ENCODE measurements at regions of chr15 and their contacts with region 1.

Region 1: DNA sequence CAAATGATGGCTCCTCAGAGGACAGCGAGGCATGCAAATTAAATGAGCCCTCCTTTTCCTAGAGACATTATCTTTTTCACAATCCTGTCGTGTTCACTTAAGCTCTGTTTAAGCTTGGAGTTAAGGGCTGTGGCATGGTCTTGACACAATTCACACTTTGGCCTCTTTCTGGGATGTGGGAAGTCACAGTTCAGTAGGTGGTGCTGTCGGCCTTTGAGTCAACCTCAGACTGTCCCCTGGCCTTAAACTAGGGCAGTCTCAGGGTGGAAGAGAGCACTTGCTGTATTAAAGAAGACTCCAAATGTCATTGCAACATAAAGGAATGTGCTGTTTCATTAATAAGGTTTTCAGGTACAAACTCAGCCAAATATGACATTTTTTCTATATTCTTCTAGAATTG is 351.0 kb downstream of the MCTP2 start:
- DNase-seq: peak; percentile 66
- H3K4me3 Mint-ChIP-seq: no peak overlapping the region
- H3K27ac Mint-ChIP-seq: no peak overlapping the region
- H3K4me1 Mint-ChIP-seq: peaks cover 31% of the 10 kb centered on the region
- H3K27me3 Mint-ChIP-seq: peaks cover 71% of the 10 kb centered on the region

Region 2: GRCh38 chr15:94174399-94174802 is 408.0 kb before region 1 on chr15:
- CTCF ChIA-PET with region 1: no interaction called
- intact Hi-C with region 1: loop called (anchors 1 kb)
- DNase-seq: peak; percentile 26
- H3K4me3 Mint-ChIP-seq: no peak overlapping the region
- H3K27ac Mint-ChIP-seq: peak overlapping the region; percentile 10
- H3K4me1 Mint-ChIP-seq: peaks cover 19% of the 10 kb centered on the region
- H3K27me3 Mint-ChIP-seq: peaks cover 6% of the 10 kb centered on the region

Region 3: DNA sequence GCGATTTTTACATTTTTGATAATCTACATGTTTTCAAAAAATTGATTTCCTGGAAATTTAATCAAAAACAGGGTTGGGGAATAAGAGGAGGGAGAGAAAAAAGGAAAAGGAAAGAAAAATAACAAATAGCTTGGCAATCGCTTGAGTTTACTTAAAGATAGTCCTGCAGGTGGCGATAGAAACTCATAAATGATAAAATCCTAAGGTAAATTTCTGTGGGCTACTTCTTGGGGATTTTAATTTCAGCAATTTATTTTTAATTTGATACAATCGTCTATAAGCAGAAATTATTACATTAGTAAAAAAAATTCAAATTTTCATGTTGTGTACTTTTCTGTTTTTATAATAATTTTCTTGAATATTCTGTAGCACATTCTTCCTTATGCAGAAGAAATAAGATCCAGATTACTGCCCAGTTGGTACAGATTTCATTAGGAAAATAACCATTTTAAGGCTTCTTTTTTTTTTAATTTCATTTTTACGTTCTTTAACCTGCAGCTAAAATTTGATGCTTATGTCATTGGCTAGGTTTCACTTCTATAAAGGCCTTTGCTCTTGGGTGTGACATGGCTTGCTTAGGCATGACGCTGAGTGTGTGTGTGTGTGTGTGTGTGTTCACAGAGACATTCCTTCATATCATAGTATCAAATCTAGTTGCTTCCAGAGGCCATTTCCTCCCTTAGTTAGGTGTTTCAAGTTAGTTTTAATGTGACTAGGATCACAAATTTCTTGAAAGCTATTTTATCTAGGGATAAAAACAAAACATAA is 169.2 kb before region 1 on chr15:
- CTCF ChIA-PET with region 1: no interaction called
- intact Hi-C with region 1: loop called (anchors 5 kb)
- DNase-seq: no peak
- H3K4me3 Mint-ChIP-seq: no peak overlapping the region
- H3K27ac Mint-ChIP-seq: no peak overlapping the region
- H3K4me1 Mint-ChIP-seq: no peaks in the 10 kb centered on the region
- H3K27me3 Mint-ChIP-seq: no peaks in the 10 kb centered on the region

Region 4: GRCh38 chr15:94670438-94671034 is 88.2 kb after region 1 on chr15:
- CTCF ChIA-PET with region 1: interaction called, 5 read pairs
- intact Hi-C with region 1: loop called (anchors 5 kb)
- DNase-seq: no peak
- H3K4me3 Mint-ChIP-seq: no peak overlapping the region
- H3K27ac Mint-ChIP-seq: no peak overlapping the region
- H3K4me1 Mint-ChIP-seq: no peaks in the 10 kb centered on the region
- H3K27me3 Mint-ChIP-seq: peaks cover 12% of the 10 kb centered on the region

Region 5: GRCh38 chr15:94683902-94684301 is 101.5 kb after region 1 on chr15:
- CTCF ChIA-PET with region 1: no interaction called
- intact Hi-C with region 1: no loop called
- DNase-seq: no peak
- H3K4me3 Mint-ChIP-seq: no peak overlapping the region
- H3K27ac Mint-ChIP-seq: no peak overlapping the region
- H3K4me1 Mint-ChIP-seq: no peaks in the 10 kb centered on the region
- H3K27me3 Mint-ChIP-seq: no peaks in the 10 kb centered on the region

Region 6: GRCh38 chr15:95192923-95193322 is 610.6 kb after region 1 on chr15:
- CTCF ChIA-PET with region 1: no interaction called
- intact Hi-C with region 1: no loop called
- DNase-seq: no peak
- H3K4me3 Mint-ChIP-seq: no peak overlapping the region
- H3K27ac Mint-ChIP-seq: no peak overlapping the region
- H3K4me1 Mint-ChIP-seq: no peaks in the 10 kb centered on the region
- H3K27me3 Mint-ChIP-seq: peaks cover 5% of the 10 kb centered on the region

Region 7: GRCh38 chr15:95291898-95292472 is 709.6 kb after region 1 on chr15:
- CTCF ChIA-PET with region 1: no interaction called
- intact Hi-C with region 1: loop called (anchors 1 kb)
- DNase-seq: no peak
- H3K4me3 Mint-ChIP-seq: no peak overlapping the region
- H3K27ac Mint-ChIP-seq: no peak overlapping the region
- H3K4me1 Mint-ChIP-seq: peaks cover under 1% of the 10 kb centered on the region
- H3K27me3 Mint-ChIP-seq: peaks cover 44% of the 10 kb centered on the region

Region 8: DNA sequence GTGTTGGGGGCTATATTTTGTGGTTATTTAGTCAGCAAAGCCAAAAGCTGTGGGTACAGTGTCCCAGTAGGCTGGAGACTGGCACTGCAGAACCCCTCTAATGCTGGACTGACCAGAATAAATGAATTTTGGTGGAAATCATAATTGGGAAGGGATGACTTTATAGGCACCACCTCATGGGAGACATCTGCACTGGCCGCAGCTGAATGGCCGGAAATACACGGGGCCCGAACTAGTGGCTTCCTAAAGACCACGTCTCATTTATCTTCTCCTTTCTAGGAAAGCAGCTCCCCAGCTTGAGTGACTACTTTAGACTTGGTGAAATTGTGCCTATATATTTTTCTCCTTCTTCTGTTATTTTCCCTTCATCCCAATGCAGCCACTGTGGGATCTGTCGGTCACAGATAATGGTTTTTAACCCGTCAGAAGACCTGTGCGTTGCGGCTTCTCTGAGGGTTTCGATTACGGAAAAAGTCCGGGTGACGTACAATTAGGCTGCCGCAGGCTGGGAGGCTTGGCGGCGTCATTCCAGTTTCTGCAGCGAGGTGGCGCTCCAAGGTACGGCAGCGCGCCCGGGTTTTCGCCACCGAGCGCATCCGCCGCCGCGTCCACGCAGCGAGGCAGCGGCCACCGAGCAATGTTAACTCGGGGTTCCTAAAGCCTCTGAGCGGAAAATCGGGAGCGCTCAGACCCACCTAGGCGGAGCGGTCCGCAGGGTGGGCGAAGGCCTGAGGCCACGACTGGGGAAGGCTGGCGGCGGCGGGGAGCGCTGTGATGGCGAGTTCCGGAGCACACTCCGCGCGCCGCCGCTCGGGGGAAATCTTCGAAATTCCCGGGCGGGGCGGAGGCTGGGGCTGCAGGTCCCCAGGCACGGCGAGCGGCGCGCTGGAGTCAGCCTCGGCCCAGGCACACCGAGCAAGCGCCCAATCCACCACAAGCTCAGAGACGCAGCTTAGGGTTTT is 1774.4 kb after region 1 on chr15:
- CTCF ChIA-PET with region 1: no interaction called
- intact Hi-C with region 1: loop called (anchors 5 kb)
- DNase-seq: peak; percentile 82
- H3K4me3 Mint-ChIP-seq: peak overlapping the region; percentile 75
- H3K27ac Mint-ChIP-seq: no peak overlapping the region
- H3K4me1 Mint-ChIP-seq: peaks cover 28% of the 10 kb centered on the region
- H3K27me3 Mint-ChIP-seq: peaks cover 65% of the 10 kb centered on the region